Aorta (tissue), 5 donors: ENCODE measurements at regions of chr4 and their contacts with region 1.

Region 1: DNA sequence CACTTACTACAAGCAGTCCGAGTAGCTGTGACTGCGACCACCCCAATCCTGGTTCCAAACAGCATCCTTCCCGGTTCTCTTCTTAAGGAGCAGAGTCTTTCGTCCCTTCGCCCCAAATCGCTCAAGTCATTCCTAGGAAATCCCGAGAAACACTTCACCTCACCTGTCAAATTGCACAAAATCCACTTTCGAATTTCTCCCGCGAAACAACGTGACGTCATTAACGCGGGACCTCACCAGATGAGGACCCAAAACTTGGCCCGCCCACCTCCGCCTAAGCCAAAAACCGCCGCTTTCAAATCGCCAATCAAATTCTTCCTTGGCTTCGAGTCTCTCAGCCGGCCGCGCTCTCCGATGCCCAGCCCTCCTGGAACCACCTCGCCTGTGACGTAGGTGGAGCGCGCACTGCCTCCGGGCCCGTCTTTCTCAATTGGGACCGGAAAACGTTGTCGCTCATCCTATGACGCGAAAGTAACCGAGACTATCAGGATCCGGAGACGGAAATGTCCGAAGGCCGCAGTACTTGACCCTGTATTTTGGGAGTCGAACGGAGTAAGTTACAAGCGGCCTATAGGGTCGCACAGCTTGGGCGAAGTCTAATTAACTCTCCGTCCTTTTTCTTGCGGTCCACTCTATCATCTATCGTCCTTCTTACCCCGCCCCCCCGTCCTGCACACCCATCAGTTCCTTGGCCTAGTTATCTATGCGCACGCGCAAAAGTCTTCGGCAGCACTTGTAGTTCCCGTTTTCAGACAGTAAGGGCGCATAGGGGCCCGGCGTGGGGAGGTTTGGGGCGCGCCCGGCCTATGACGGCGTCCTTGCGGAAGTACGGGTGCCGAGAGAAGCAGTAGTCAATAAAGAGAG is at the starts of genes LARP7 and ZGRF1:
- DNase-seq: peak; percentile 100
- ATAC-seq: peak; percentile 99
- H3K4me3 ChIP-seq: peak within 1 kb of the TSS; percentile 92
- H3K27ac ChIP-seq: peak within 1 kb of the TSS; percentile 78 to 85
- H3K4me1 ChIP-seq: peaks cover 0 to 2% of the 10 kb centered on the region in 2 donors
- H3K27me3 ChIP-seq: no peaks in the 10 kb centered on the region
- total RNA-seq, gene LARP7: 38.6 to 41.3 TPM
- total RNA-seq, gene ZGRF1: 5.4 to 6.3 TPM

Region 2: DNA sequence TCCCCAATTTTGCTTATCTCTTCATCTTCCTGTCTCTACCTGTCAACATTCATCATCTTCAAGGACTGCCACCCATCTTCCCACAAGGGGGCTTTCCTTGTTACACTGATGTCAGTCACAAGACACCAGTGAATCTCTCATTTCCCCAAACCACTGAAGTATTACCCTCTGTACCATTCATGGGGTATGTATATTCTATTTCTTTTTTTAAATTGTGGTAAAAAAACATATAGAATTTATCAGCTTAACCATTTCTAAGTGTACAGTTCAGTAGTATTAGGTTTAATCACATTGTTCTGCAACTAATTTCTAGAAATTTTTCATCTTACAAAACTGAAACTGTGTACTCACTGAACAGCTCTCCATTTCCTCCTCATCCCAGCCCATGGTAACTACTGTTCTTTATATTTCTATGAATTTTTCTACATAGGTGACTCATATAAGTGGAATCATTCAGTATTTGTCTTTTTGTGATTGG is 98.6 kb after region 1 on chr4:
- intact Hi-C with region 1: no loop called
- DNase-seq: no peak
- ATAC-seq: no peak
- H3K4me3 ChIP-seq: no peak overlapping the region
- H3K27ac ChIP-seq: no peak overlapping the region
- H3K4me1 ChIP-seq: no peaks in the 10 kb centered on the region
- H3K27me3 ChIP-seq: no peaks in the 10 kb centered on the region

Region 3: GRCh38 chr4:112938461-112939058 is 301.6 kb after region 1 on chr4:
- intact Hi-C with region 1: loop called (anchors 5 kb)
- DNase-seq: no peak
- ATAC-seq: peak; percentile 69
- H3K4me3 ChIP-seq: no peak overlapping the region
- H3K27ac ChIP-seq: no peak overlapping the region
- H3K4me1 ChIP-seq: no peaks in the 10 kb centered on the region
- H3K27me3 ChIP-seq: no peaks in the 10 kb centered on the region